ENCODE measurements at regions of chr14 and their contacts with region 1.

Region 1: DNA sequence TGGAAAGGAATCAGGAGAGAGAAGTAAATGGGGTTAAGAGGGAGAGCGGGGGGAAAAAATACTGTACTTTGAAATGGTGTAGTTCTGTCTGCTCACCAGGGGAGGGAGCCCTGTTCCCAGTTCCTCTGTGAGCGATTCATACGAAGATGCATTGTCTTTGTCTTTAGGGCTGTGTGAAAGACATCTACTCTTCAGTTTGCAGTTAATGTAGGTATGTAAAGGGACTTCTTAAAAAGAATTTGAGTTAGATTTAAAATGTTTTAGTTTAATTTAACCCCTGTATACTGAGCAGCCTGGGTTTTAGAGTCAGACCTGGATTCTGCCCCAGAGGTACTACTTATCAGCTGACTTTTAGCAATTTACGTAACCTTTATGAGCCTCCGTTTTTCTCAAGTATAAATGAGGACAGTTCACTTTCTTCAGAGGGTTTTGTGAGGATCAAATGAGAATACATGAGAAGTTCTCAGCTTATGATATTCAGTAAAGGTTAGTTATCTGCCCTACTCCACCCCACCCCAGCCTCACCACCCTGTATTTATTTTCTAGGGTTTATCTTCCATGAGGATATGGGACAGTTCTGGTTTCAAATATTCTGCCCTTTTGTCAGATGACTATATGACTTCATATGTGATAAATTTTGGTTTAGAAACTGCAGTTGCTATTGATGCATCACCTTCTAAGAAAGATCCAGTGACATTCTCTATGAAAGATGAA is 82.5 kb upstream of the EVL start:
- DNase-seq: peak; percentile 78
- ATAC-seq: peak; percentile 87
- H3K4me3 Mint-ChIP-seq: no peak overlapping the region
- H3K27ac Mint-ChIP-seq: no peak overlapping the region
- H3K4me1 Mint-ChIP-seq: peaks cover 22% of the 10 kb centered on the region
- H3K27me3 Mint-ChIP-seq: no peaks in the 10 kb centered on the region

Region 2: GRCh38 chr14:99995700-99996356 is 13.1 kb after region 1 on chr14:
- CTCF ChIA-PET with region 1: interaction called, 12 read pairs
- POLR2A ChIA-PET with region 1: no interaction called
- DNase-seq: peak; percentile 78
- ATAC-seq: peak; percentile 91
- H3K4me3 Mint-ChIP-seq: no peak overlapping the region
- H3K27ac Mint-ChIP-seq: no peak overlapping the region
- H3K4me1 Mint-ChIP-seq: peaks cover 8% of the 10 kb centered on the region
- H3K27me3 Mint-ChIP-seq: peaks cover 7% of the 10 kb centered on the region

Region 3: DNA sequence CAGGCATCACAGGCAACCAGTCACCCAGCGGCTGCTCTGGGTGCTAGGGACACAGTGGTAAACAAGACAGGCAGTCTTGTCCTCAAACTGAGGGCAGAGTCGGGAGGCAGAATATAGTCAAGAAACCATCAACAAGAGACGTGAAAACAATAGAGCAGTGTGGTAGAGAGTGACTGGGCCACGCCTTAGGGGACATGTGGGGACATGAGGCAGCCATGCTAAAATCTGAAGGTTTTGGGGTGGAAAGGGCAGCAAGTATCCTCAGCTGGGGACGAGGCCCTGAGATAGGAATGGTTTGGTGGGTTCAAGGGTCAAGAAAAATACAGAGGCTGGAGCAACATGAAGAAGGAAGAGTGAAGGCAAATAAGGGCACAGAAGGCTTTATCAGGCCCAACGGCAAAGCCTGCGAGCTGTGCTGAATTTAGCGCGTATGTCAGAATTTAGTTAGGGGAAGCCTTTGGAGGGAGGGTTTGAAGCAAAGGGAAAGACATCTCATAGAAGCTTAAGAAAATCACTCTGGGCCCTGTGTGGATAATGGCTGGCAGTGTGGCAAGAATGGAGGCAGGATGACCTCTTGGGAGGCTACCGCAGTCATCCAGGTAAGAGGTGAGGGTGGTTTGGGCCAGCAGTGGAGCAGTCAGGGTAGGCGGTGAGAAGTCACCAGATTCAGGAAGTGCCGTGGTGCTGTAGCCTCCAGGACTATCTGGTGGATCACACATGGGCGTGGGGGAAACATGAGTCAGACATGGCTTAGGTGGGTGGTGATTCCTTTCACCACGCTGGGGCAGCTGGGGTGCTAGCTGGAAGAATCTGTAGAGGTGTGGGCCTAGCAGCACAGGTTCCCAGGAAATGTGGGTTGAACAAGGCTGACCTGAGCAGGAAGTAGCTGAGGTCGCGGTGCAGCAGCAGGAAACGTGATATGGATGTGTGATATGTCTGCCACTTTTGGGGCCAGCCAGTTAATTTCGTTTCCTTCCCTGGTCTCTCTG is 85.6 kb after region 1 on chr14:
- CTCF ChIA-PET with region 1: interaction called, 42 read pairs
- POLR2A ChIA-PET with region 1: interaction called, 7 read pairs
- DNase-seq: peak; percentile 95
- ATAC-seq: peak; percentile 67
- H3K4me3 Mint-ChIP-seq: peak overlapping the region; percentile 91
- H3K27ac Mint-ChIP-seq: peak overlapping the region; percentile 97
- H3K4me1 Mint-ChIP-seq: peaks cover 36% of the 10 kb centered on the region
- H3K27me3 Mint-ChIP-seq: no peaks in the 10 kb centered on the region

Region 4: DNA sequence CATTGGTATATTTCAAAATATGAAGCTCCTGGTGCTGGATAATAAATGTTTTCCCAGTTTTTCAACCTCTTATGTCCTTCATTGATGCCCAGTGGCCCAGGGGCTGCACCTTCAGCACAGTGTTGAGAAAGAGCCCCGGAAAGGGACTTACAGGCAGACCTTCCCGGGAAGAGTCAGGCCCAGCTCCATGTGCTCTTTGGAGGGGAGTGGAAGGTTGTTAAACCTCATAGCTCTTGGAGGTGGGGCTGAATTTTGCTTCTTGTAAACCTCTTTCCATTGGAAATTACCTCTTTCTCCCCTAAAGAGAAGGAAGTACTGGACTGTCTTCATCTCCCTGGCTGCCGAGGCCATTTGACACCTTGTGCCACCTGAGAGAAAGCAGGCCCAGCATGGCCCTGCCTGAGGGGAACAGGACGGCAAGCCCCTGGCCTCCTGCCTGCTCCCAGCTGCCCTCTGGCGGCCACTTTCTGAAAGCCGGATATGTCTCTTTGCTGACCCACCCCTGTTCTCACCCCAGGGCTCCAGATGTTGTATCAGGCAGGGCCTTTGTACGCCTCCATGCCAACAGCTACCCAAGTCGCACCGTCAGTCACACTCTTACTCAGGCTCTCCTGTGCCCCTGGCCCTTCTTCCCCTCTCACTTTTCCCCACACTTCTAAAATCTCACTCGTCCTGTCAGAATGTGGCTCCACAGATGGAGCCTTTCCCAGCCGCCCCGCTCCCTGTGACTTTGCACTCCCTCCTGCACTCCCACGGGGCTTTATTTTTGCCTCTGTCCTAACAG is 125.5 kb after region 1 on chr14:
- CTCF ChIA-PET with region 1: interaction called, 43 read pairs
- POLR2A ChIA-PET with region 1: no interaction called
- DNase-seq: peak; percentile 89
- ATAC-seq: peak; percentile 66
- H3K4me3 Mint-ChIP-seq: no peak overlapping the region
- H3K27ac Mint-ChIP-seq: peak overlapping the region; percentile 86
- H3K4me1 Mint-ChIP-seq: peaks cover 82% of the 10 kb centered on the region
- H3K27me3 Mint-ChIP-seq: no peaks in the 10 kb centered on the region

Region 5: GRCh38 chr14:100239840-100240724 is 257.4 kb after region 1 on chr14:
- CTCF ChIA-PET with region 1: interaction called, 10 read pairs
- POLR2A ChIA-PET with region 1: no interaction called
- DNase-seq: peak; percentile 85
- ATAC-seq: peak; percentile 43
- H3K4me3 Mint-ChIP-seq: peak overlapping the region; percentile 93
- H3K27ac Mint-ChIP-seq: peak overlapping the region; percentile 89
- H3K4me1 Mint-ChIP-seq: peaks cover 48% of the 10 kb centered on the region
- H3K27me3 Mint-ChIP-seq: no peaks in the 10 kb centered on the region